Activated CD8-positive, alpha-beta T cell treated with anti-CD3 and anti-CD28 coated beads for 36 hours (primary cell): ENCODE measurements at regions of chr16 and their contacts with region 1.

Region 1: DNA sequence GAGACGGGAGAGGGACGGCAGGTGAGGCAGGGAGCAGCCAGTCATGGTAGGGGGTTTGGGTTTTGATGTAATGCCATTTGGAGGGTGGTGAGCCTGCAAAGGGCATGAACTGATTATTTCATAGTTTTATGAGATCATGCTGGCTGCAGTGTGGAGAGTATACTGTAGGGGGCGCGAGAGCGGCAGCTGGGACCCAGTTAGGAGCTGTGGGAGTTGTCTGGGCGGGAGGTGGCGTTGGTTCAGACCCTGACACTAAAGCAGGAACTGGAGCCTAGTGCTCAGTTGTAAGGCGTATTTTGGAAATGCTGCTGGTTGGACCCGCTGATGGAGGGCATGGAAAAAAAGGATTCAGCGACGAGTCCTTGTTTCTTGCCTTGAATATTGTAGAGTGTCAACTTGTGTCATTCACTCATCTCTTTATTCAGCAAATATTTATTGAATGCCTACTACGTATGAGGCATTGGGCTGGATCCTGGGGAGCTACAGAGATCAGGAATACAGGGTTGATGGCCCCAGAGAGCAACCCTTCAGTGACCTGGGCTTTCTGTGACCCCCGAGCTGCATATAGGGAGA is 23.7 kb upstream of the KDM8 start:
- DNase-seq: peak; percentile 97
- ATAC-seq: peak; percentile 98
- H3K4me3 Mint-ChIP-seq: no peak overlapping the region
- H3K27ac Mint-ChIP-seq: peak overlapping the region; percentile 43
- H3K4me1 Mint-ChIP-seq: peaks cover 44% of the 10 kb centered on the region
- H3K27me3 Mint-ChIP-seq: no peaks in the 10 kb centered on the region
- CTCF ChIP-seq: peak; percentile 98

Region 2: GRCh38 chr16:26816885-26817571 is 362.6 kb before region 1 on chr16:
- CTCF ChIA-PET with region 1: no interaction called
- POLR2A ChIA-PET with region 1: no interaction called
- intact Hi-C with region 1: no loop called
- DNase-seq: peak; percentile 23
- ATAC-seq: peak; percentile 56
- H3K4me3 Mint-ChIP-seq: no peak overlapping the region
- H3K27ac Mint-ChIP-seq: no peak overlapping the region
- H3K4me1 Mint-ChIP-seq: no peaks in the 10 kb centered on the region
- H3K27me3 Mint-ChIP-seq: peaks cover 8% of the 10 kb centered on the region
- CTCF ChIP-seq: no peak

Region 3: GRCh38 chr16:27097800-27098230 is 81.8 kb before region 1 on chr16:
- CTCF ChIA-PET with region 1: no interaction called
- POLR2A ChIA-PET with region 1: no interaction called
- intact Hi-C with region 1: no loop called
- DNase-seq: no peak
- ATAC-seq: no peak
- H3K4me3 Mint-ChIP-seq: no peak overlapping the region
- H3K27ac Mint-ChIP-seq: no peak overlapping the region
- H3K4me1 Mint-ChIP-seq: no peaks in the 10 kb centered on the region
- H3K27me3 Mint-ChIP-seq: peaks cover 3% of the 10 kb centered on the region
- CTCF ChIP-seq: no peak

Region 4: DNA sequence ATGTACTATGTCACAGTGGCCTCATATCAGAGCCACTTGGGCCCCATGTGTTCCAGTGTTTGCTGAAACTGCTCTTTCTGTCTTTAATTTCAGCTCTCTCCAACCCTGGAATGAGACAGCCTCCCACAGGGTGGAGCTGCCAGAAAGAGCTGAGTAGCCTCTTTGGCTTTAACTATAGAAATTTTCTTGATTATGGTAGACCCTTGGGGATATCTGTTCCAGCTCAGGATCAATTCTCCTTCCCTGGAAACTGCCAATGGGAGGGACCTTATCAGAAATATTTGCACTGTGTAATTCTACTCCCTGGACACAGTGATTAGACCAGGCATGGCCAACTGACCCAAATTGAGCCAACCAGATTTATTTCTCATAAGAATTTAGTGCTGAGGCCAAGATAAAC is 15.2 kb before region 1 on chr16:
- CTCF ChIA-PET with region 1: interaction called, 43 read pairs
- POLR2A ChIA-PET with region 1: interaction called, 3 read pairs
- intact Hi-C with region 1: no loop called
- DNase-seq: no peak
- ATAC-seq: no peak
- H3K4me3 Mint-ChIP-seq: no peak overlapping the region
- H3K27ac Mint-ChIP-seq: no peak overlapping the region
- H3K4me1 Mint-ChIP-seq: peaks cover 13% of the 10 kb centered on the region
- H3K27me3 Mint-ChIP-seq: no peaks in the 10 kb centered on the region
- CTCF ChIP-seq: no peak

Region 5: DNA sequence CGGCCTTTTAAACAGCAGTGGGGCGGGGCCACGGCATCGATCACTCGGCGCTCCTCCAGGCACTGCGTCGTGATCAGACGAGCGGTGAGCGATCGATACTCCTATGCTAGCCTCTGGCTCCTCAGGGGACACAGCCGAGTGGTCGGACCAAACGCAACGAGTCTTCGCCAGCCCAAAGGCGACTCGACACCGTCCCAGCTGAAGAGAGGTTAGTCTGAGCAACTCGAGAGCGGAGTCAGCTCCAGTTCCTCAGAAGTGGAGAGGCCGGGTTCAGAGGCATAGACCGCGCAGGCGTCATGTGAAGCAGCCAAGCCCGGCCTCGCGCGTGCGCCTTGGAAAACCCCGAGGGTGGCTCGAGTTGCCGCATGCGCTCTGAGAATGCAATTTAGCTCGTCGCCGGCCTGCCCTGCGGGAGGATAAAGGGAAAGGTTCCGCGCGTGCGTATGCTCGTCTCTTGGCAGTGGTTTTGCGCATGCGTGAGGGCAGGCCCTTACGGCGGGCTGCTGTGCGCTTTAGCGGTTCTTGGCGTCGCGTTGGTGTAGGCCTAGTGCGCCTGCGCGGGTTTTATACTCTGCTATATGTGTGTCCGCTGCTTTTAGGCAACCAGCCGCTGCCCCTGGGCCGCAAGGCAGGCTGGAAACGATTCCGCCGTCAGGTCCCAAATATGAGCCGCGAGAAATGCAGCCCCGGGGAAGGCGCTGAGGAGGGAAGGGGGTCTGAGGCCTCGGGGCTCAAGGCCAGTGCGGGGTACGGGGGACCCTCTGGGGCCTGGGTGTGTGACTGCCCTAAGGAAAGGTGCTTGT is 24.0 kb after region 1 on chr16 and contains the start of gene KDM8:
- CTCF ChIA-PET with region 1: interaction called, 29 read pairs
- POLR2A ChIA-PET with region 1: interaction called, 4 read pairs
- intact Hi-C with region 1: no loop called
- DNase-seq: peak; percentile 99
- ATAC-seq: peak; percentile 92
- H3K4me3 Mint-ChIP-seq: peak within 1 kb of the TSS; percentile 83
- H3K27ac Mint-ChIP-seq: peak within 1 kb of the TSS; percentile 100
- H3K4me1 Mint-ChIP-seq: peaks cover 48% of the 10 kb centered on the region
- H3K27me3 Mint-ChIP-seq: no peaks in the 10 kb centered on the region
- CTCF ChIP-seq: no peak
- total RNA-seq, gene KDM8: 10.9 to 12.7 TPM

Region 6: GRCh38 chr16:27267037-27267677 is 87.6 kb after region 1 on chr16:
- CTCF ChIA-PET with region 1: no interaction called
- POLR2A ChIA-PET with region 1: no interaction called
- intact Hi-C with region 1: no loop called
- DNase-seq: no peak
- ATAC-seq: no peak
- H3K4me3 Mint-ChIP-seq: peak overlapping the region; percentile 91
- H3K27ac Mint-ChIP-seq: peak overlapping the region; percentile 85
- H3K4me1 Mint-ChIP-seq: peaks cover 74% of the 10 kb centered on the region
- H3K27me3 Mint-ChIP-seq: no peaks in the 10 kb centered on the region
- CTCF ChIP-seq: no peak

Region 7: GRCh38 chr16:27318392-27319226 is 139.0 kb after region 1 on chr16:
- CTCF ChIA-PET with region 1: interaction called, 22 read pairs
- POLR2A ChIA-PET with region 1: interaction called, 3 read pairs
- intact Hi-C with region 1: no loop called
- DNase-seq: peak; percentile 84
- ATAC-seq: peak; percentile 76
- H3K4me3 Mint-ChIP-seq: peak overlapping the region; percentile 89
- H3K27ac Mint-ChIP-seq: peak overlapping the region; percentile 98
- H3K4me1 Mint-ChIP-seq: peaks cover 59% of the 10 kb centered on the region
- H3K27me3 Mint-ChIP-seq: no peaks in the 10 kb centered on the region
- CTCF ChIP-seq: no peak

Region 8: GRCh38 chr16:27455700-27456099 is 276.1 kb after region 1 on chr16:
- CTCF ChIA-PET with region 1: interaction called, 13 read pairs
- POLR2A ChIA-PET with region 1: no interaction called
- intact Hi-C with region 1: no loop called
- DNase-seq: peak; percentile 60
- ATAC-seq: peak; percentile 14
- H3K4me3 Mint-ChIP-seq: no peak overlapping the region
- H3K27ac Mint-ChIP-seq: peak overlapping the region; percentile 73
- H3K4me1 Mint-ChIP-seq: peaks cover 71% of the 10 kb centered on the region
- H3K27me3 Mint-ChIP-seq: no peaks in the 10 kb centered on the region
- CTCF ChIP-seq: no peak